Activated B cell treated with CpG ODN at 0.5 μM for 24 hours (primary cell): ENCODE measurements at regions of chr11 and their contacts with region 1.

Region 1: GRCh38 chr11:10641177-10641911 is 52.2 kb downstream of the IRAG1 start:
- DNase-seq: no peak
- ATAC-seq: peak; percentile 84
- H3K4me3 Mint-ChIP-seq: peak overlapping the region; percentile 62
- H3K27ac Mint-ChIP-seq: peak overlapping the region; percentile 96
- H3K4me1 Mint-ChIP-seq: peaks cover 83% of the 10 kb centered on the region
- H3K27me3 Mint-ChIP-seq: no peaks in the 10 kb centered on the region
- CTCF ChIP-seq: no peak

Region 2: GRCh38 chr11:10564696-10565318 is 76.5 kb before region 1 on chr11:
- CTCF ChIA-PET with region 1: no interaction called
- POLR2A ChIA-PET with region 1: no interaction called
- intact Hi-C with region 1: loop called (anchors 2 kb)
- DNase-seq: no peak
- ATAC-seq: peak; percentile 31
- H3K4me3 Mint-ChIP-seq: no peak overlapping the region
- H3K27ac Mint-ChIP-seq: peak overlapping the region; percentile 38
- H3K4me1 Mint-ChIP-seq: peaks cover 44% of the 10 kb centered on the region
- H3K27me3 Mint-ChIP-seq: no peaks in the 10 kb centered on the region
- CTCF ChIP-seq: no peak

Region 3: GRCh38 chr11:10606536-10607208 is 34.7 kb before region 1 on chr11:
- CTCF ChIA-PET with region 1: no interaction called
- POLR2A ChIA-PET with region 1: interaction called, 11 read pairs
- intact Hi-C with region 1: loop called (anchors 1 kb)
- DNase-seq: no peak
- ATAC-seq: peak; percentile 84
- H3K4me3 Mint-ChIP-seq: peak overlapping the region; percentile 73
- H3K27ac Mint-ChIP-seq: peak overlapping the region; percentile 90
- H3K4me1 Mint-ChIP-seq: peaks cover 99% of the 10 kb centered on the region
- H3K27me3 Mint-ChIP-seq: no peaks in the 10 kb centered on the region
- CTCF ChIP-seq: no peak

Region 4: DNA sequence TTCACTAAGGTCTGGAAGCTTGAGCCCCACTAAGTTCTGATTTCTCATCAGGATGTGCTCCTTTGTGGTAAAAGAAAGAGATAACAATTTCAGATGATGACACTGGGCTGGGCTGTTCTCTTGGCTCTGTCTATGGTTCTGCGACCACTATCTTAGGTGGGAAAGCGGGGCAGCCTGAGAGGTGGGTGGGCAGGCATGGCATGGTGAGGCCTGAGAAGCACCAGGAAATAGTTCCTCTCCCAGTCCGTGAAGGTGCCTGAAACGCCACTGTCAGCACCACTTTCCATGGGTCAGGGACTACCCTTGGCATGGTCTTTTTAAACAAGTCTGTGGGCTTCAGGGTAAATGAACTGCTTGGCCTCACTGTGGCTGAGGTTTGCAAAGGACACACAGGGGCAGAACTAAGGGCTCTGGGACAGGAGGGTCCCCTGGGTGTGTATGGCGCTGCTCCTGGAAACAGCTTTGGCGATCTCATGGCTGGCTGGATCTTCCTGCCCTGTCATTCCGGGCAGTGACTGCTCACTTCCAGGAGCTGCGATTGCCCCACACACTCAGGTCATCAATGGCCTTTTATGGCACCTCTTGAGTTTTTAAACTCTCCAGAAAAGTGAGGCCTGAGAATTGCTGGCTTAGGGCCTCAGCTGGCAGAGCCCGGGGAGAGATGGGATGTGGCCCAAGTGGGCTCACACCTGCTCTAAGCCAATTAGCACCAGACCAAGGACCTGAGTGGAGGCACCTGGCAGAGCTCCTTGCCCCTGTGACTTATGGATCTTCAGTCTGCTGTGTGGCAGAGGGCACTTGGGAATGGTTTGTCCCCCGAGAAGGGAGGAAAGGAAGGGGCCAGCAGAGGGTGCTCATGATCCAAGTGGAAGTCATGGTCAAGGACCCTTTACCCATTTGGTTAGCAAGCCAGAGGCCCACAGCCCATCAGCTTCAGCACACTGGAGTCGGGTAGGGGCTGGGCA is 17.3 kb before region 1 on chr11:
- CTCF ChIA-PET with region 1: interaction called, 4 read pairs
- POLR2A ChIA-PET with region 1: interaction called, 6 read pairs
- intact Hi-C with region 1: loop called (anchors 2 kb)
- DNase-seq: no peak
- ATAC-seq: peak; percentile 9
- H3K4me3 Mint-ChIP-seq: no peak overlapping the region
- H3K27ac Mint-ChIP-seq: peak overlapping the region; percentile 95
- H3K4me1 Mint-ChIP-seq: peaks cover 77% of the 10 kb centered on the region
- H3K27me3 Mint-ChIP-seq: no peaks in the 10 kb centered on the region
- CTCF ChIP-seq: no peak

Region 5: GRCh38 chr11:10653926-10654810 is 12.8 kb after region 1 on chr11:
- CTCF ChIA-PET with region 1: interaction called, 6 read pairs
- POLR2A ChIA-PET with region 1: interaction called, 5 read pairs
- intact Hi-C with region 1: loop called (anchors 1 kb)
- DNase-seq: no peak
- ATAC-seq: peak; percentile 53
- H3K4me3 Mint-ChIP-seq: no peak overlapping the region
- H3K27ac Mint-ChIP-seq: peak overlapping the region; percentile 38
- H3K4me1 Mint-ChIP-seq: peaks cover 87% of the 10 kb centered on the region
- H3K27me3 Mint-ChIP-seq: no peaks in the 10 kb centered on the region
- CTCF ChIP-seq: no peak